ENCODE measurements at regions of chr7 and their contacts with region 1.

Region 1: GRCh38 chr7:35694781-35695472 is at the start of gene HERPUD2:
- DNase-seq: peak; percentile 88
- ATAC-seq: peak; percentile 90
- H3K4me3 Mint-ChIP-seq: peak within 1 kb of the TSS; percentile 95
- H3K27ac Mint-ChIP-seq: peak within 1 kb of the TSS; percentile 92
- H3K4me1 Mint-ChIP-seq: peaks cover 61% of the 10 kb centered on the region
- H3K27me3 Mint-ChIP-seq: no peaks in the 10 kb centered on the region
- CTCF ChIP-seq: no peak
- total RNA-seq, gene HERPUD2: 26.2 and 31.5 TPM in 2 replicates

Region 2: DNA sequence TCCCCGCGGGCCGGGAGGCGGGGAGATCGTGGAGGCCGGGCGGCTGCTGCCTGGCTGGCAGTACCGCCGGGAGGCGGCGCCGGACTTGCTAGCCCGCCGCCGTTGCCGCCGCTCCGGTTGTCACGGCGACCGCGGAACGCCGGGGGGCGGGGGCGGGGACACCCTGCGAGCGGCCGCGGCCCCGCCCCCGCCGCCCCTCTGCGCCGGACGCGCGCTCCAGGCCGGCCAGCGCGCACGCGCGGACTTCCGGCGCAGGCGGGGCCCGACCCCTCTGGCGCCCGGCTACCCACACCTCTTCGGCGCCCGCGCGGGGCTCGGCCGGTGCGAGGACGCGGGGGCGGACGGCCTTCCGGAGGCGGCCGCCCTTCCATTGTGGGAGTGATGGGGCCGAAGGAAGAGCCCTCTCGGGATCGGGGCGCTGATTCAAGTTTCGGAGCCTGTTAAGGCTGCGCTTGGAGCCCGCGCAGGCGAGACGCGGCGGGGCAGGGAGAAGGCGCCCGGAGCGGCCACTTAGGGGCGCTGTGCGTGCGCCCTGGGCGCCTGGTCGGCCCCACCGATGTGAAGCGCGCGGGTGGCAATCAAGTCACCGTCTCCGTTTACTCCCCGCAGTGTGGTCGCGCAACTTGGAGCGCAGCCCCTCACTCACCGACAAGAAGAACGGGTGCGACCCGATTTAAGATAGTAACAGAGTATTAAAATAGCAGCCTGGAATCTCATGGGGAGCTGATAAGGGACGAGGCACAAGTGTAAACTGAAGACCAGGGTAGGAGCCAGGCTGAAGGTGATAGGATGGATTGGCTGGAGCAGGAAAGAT is 657.2 kb before region 1 on chr7:
- CTCF ChIA-PET with region 1: no interaction called
- POLR2A ChIA-PET with region 1: no interaction called
- intact Hi-C with region 1: loop called (anchors 2 kb)
- DNase-seq: peak; percentile 96
- ATAC-seq: peak; percentile 83
- H3K4me3 Mint-ChIP-seq: peak overlapping the region; percentile 86
- H3K27ac Mint-ChIP-seq: peak overlapping the region; percentile 72
- H3K4me1 Mint-ChIP-seq: peaks cover 29% of the 10 kb centered on the region
- H3K27me3 Mint-ChIP-seq: peaks cover 4% of the 10 kb centered on the region
- CTCF ChIP-seq: no peak

Region 3: DNA sequence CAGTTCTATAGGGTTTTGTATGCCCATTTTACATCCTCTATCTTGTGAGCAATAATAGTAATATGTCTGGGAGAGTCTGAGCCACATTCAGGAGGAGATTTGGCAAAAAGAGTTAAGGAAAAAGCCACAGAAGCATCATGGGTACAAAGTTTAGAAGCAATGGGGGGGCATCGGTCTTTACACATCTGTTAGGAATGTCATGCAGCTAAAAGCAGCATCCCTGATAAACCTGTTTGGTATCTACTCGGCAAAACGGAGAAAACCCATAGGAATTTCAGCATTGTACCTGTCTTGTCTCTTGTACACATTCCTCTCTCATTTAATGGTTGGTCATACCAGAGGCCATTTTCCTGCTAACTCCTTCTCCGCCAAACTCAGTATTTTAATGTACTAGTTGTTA is 12.5 kb after region 1 on chr7:
- CTCF ChIA-PET with region 1: interaction called, 7 read pairs
- POLR2A ChIA-PET with region 1: interaction called, 10 read pairs
- intact Hi-C with region 1: loop called (anchors 1 kb)
- DNase-seq: no peak
- ATAC-seq: no peak
- H3K4me3 Mint-ChIP-seq: no peak overlapping the region
- H3K27ac Mint-ChIP-seq: no peak overlapping the region
- H3K4me1 Mint-ChIP-seq: peaks cover 11% of the 10 kb centered on the region
- H3K27me3 Mint-ChIP-seq: no peaks in the 10 kb centered on the region
- CTCF ChIP-seq: no peak

Region 4: DNA sequence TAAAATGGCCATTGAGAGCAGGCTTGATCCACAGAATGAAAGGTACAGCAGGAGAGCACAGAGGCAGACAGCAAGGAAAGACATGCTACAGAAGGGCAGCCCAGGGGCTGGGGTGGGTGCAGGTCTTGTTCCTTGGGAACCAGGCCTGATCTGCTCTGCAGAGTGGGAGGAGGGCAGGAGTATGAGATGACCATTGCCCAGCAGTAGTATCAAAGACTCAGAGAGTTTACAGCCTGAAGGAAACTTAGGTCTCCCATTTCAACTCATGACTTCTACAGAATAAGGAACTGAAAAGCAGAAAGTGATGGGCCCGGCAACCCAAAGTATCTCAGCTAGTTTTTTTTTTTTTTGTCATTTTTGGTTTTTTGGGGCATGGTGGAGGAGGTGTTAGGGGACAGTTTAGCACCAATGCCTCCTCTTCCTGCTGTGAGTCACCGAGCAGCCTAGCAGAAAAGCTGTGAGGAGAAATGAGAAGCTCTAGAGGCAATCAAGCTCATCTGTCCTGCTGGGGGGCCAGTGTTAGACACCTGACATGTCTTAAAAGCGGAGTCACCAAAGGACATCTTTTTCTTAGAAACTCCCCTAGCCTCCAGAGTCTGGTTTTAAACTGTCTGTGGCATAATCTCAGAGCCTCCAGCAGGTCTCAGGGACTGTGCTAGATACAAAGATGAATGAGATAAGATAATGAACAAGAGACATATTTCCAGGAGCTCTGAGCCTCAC is 34.3 kb after region 1 on chr7:
- CTCF ChIA-PET with region 1: interaction called, 6 read pairs
- POLR2A ChIA-PET with region 1: interaction called, 34 read pairs
- intact Hi-C with region 1: loop called (anchors 1 kb)
- DNase-seq: peak; percentile 53
- ATAC-seq: peak; percentile 81
- H3K4me3 Mint-ChIP-seq: peak overlapping the region; percentile 70
- H3K27ac Mint-ChIP-seq: peak overlapping the region; percentile 93
- H3K4me1 Mint-ChIP-seq: peaks cover 93% of the 10 kb centered on the region
- H3K27me3 Mint-ChIP-seq: no peaks in the 10 kb centered on the region
- CTCF ChIP-seq: no peak

Region 5: DNA sequence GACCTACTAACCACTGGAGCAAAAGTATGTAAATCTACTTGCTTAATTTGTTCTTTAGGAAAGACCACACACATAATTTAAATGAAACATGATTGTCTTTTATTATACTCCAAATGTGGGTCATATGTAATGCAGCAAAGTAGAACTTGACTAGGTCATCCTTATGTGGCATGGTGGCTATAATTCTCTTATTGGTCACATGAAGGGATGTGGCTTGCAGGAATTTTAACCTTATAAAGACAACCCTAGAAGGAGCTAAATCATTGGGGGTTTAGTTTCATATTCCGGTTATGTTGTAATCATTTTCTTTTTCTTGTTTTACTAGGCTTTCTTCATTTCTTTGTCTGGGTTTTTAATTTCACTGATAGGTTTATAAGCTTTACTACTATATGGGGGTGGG is 199.8 kb after region 1 on chr7:
- CTCF ChIA-PET with region 1: no interaction called
- POLR2A ChIA-PET with region 1: no interaction called
- intact Hi-C with region 1: no loop called
- DNase-seq: no peak
- ATAC-seq: no peak
- H3K4me3 Mint-ChIP-seq: no peak overlapping the region
- H3K27ac Mint-ChIP-seq: no peak overlapping the region
- H3K4me1 Mint-ChIP-seq: peaks cover 8% of the 10 kb centered on the region
- H3K27me3 Mint-ChIP-seq: no peaks in the 10 kb centered on the region
- CTCF ChIP-seq: no peak

Region 6: DNA sequence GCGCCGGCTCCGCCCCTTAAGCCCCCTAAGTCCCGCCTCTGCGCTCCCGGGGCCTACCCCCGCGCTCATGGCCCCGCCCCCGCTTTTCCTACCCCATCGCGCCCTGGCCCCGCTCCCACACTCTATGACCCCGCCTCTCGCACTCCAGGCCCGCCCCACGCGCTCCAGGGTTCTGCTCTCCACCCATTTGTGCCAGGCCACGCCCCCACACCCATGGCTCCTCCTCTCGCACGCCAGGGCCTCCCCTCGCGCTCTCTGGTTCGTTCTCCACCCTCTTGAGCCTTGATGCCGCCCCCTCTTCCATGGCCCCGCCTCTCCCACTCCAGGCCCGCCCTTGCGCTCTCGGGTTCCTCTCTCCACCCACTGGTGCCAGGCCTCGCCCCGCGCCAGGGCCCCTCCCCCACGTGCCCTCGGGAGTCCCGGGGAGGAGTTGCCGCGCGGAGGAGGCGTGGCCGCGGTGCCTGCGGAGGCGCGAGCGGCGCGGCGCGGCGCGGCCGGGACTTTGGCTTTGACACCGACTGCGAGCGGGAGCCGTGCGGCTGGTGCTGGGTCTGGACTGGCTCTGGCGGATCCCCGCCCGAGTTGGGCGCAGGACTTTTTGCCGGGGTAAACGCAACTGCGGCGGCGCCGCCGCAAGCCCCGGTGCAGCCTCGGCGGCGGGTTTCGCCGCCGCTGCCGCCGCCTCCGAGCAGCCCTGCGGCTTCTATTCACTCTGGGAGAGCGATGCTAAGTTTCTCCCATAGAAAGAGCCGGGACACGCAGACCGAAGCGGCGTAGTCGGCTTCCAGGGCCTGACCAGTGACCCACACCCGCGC is 458.0 kb after region 1 on chr7 and contains the start of gene EEPD1:
- CTCF ChIA-PET with region 1: no interaction called
- POLR2A ChIA-PET with region 1: no interaction called
- intact Hi-C with region 1: loop called (anchors 1 kb)
- DNase-seq: peak; percentile 100
- ATAC-seq: peak; percentile 92
- H3K4me3 Mint-ChIP-seq: peak within 1 kb of the TSS; percentile 80
- H3K27ac Mint-ChIP-seq: no peak within 1 kb of the TSS
- H3K4me1 Mint-ChIP-seq: peaks cover 11% of the 10 kb centered on the region
- H3K27me3 Mint-ChIP-seq: peaks cover 3% of the 10 kb centered on the region
- CTCF ChIP-seq: no peak
- total RNA-seq, gene EEPD1: 0.59 and 0.64 TPM in 2 replicates

Region 7: GRCh38 chr7:36366718-36367560 is 672.0 kb after region 1 on chr7:
- CTCF ChIA-PET with region 1: interaction called, 4 read pairs
- POLR2A ChIA-PET with region 1: interaction called, 3 read pairs
- intact Hi-C with region 1: loop called (anchors 2 kb)
- DNase-seq: peak; percentile 93
- ATAC-seq: peak; percentile 98
- H3K4me3 Mint-ChIP-seq: peak overlapping the region; percentile 92
- H3K27ac Mint-ChIP-seq: peak overlapping the region; percentile 30
- H3K4me1 Mint-ChIP-seq: peaks cover 5% of the 10 kb centered on the region
- H3K27me3 Mint-ChIP-seq: peaks cover 6% of the 10 kb centered on the region
- CTCF ChIP-seq: no peak

Region 8: GRCh38 chr7:36473454-36474282 is 778.7 kb after region 1 on chr7:
- CTCF ChIA-PET with region 1: no interaction called
- POLR2A ChIA-PET with region 1: no interaction called
- intact Hi-C with region 1: no loop called
- DNase-seq: no peak
- ATAC-seq: no peak
- H3K4me3 Mint-ChIP-seq: no peak overlapping the region
- H3K27ac Mint-ChIP-seq: no peak overlapping the region
- H3K4me1 Mint-ChIP-seq: no peaks in the 10 kb centered on the region
- H3K27me3 Mint-ChIP-seq: peaks cover 3% of the 10 kb centered on the region
- CTCF ChIP-seq: no peak